ENCODE measurements at regions of chr7 and their contacts with region 1.

Region 1: GRCh38 chr7:44541028-44541869 is at the start of gene NPC1L1:
- DNase-seq: peak; percentile 90
- H3K4me3 Mint-ChIP-seq: peak within 1 kb of the TSS; percentile 78
- H3K27ac Mint-ChIP-seq: peak within 1 kb of the TSS; percentile 85
- H3K4me1 Mint-ChIP-seq: peaks cover 85% of the 10 kb centered on the region
- H3K27me3 Mint-ChIP-seq: no peaks in the 10 kb centered on the region
- CTCF ChIP-seq: no peak
- total RNA-seq, gene NPC1L1: 45.0 and 46.0 TPM in 2 replicates

Region 2: GRCh38 chr7:44490351-44491200 is 50.7 kb before region 1 on chr7 and contains the start of gene NUDCD3:
- CTCF ChIA-PET with region 1: interaction called, 4 read pairs
- intact Hi-C with region 1: loop called (anchors 1 kb)
- DNase-seq: peak; percentile 91
- H3K4me3 Mint-ChIP-seq: peak within 1 kb of the TSS; percentile 87
- H3K27ac Mint-ChIP-seq: peak within 1 kb of the TSS; percentile 97
- H3K4me1 Mint-ChIP-seq: peaks cover 39% of the 10 kb centered on the region
- H3K27me3 Mint-ChIP-seq: no peaks in the 10 kb centered on the region
- CTCF ChIP-seq: no peak
- total RNA-seq, gene NUDCD3: 176 and 202 TPM in 2 replicates